GM23248 (cell line): ENCODE measurements at regions of chr2 and their contacts with region 1.

Region 1: GRCh38 chr2:28594289-28595108 is 98.6 kb downstream of the PLB1 start:
- DNase-seq: peak; percentile 84
- H3K4me3 ChIP-seq: no peak overlapping the region
- H3K27ac ChIP-seq: no peak overlapping the region
- H3K4me1 ChIP-seq: 0 out of 2 replicates have a peak, but pooled peaks cover 8% of the 10 kb centered on the region
- H3K27me3 ChIP-seq: no peaks in the 10 kb centered on the region

Region 2: DNA sequence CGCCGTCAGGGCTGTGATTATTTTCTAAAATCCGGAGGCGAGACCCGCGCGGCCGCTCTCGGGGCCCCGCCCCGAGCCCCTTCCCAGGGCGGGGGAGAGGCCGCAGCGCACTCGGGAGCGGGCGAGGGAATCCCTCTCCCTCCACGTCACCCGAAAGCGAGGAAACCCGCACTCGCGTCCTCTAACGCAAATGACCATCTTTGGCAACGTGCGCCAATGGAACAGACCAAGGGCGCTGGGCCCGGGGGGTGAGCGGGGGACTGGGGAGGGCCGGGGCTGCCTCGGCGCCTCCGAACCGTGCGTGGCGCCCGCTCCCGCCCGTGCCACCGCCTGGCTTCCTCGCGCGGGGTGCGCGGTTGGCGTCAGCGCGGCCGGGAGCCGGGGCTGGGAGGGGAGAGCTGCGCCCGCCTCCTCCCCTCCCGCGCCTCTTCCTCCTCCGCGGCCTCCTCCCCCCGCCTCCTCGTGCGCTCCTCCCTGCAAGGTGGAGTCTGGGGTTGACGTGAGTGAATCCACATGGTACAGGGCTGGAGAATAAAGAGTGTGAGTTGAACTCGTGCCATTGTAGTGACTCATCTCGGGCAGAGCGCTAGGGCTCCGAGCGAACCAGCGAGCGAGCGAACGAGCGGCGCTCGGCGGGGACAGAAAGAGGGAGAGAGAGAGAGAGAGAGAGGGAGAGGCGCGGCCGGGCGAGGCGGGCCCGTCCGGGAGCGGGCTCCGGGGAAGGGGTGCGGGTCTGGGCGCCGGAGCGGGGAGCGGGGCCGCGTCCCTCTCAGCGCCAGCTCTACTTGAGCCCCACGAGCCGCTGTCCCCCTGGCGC is 202.0 kb before region 1 on chr2 and contains the start of gene FOSL2:
- in situ Hi-C with region 1: no loop called
- DNase-seq: peak; percentile 99
- H3K4me3 ChIP-seq: peak within 1 kb of the TSS; percentile 95
- H3K27ac ChIP-seq: peak within 1 kb of the TSS; percentile 98
- H3K4me1 ChIP-seq: peaks cover 21% of the 10 kb centered on the region
- H3K27me3 ChIP-seq: no peaks in the 10 kb centered on the region
- total RNA-seq, gene FOSL2: 78.0 and 83.5 TPM in 2 replicates

Region 3: DNA sequence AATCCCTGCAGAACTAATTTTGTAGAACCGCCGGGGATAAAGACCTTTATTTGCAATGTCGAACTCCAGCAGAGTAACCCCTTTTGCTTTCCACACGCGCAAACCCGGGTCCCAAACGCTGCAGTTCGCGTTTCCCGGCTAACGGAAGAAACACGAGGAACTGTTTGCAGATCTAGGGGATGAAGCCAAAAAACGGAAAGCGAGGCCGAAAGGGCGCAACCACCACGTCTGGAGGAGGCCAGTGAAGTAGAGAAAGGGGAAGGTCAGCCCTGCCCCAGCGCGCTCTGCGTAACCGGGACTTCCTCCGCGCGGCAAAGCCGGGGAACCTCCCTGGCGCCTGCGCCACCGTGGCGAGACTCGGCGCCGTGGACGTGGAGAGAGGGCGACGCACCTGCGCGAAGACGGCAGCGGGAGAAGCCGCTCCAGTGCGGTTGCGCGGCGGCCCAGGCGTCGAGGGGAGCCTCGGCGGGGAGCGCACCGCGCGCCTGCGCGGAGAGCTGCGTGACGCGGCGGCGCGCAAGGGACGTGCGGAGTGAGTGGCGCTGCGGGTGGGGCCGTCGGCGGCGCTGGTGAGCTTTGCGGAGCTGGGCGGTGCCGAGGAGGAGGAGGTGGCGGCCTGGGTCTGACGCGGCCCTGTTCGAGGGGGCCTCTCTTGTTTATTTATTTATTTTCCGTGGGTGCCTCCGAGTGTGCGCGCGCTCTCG is 156.9 kb after region 1 on chr2 and contains the start of gene PPP1CB:
- in situ Hi-C with region 1: loop called (anchors 10 kb)
- DNase-seq: peak; percentile 99
- H3K4me3 ChIP-seq: peak within 1 kb of the TSS; percentile 88
- H3K27ac ChIP-seq: peak within 1 kb of the TSS; percentile 93
- H3K4me1 ChIP-seq: peaks cover 31% of the 10 kb centered on the region
- H3K27me3 ChIP-seq: no peaks in the 10 kb centered on the region
- total RNA-seq, gene PPP1CB: 119 and 127 TPM in 2 replicates

Region 4: GRCh38 chr2:29561181-29561580 is 966.7 kb after region 1 on chr2:
- in situ Hi-C with region 1: no loop called
- DNase-seq: no peak
- H3K4me3 ChIP-seq: no peak overlapping the region
- H3K27ac ChIP-seq: no peak overlapping the region
- H3K4me1 ChIP-seq: no peaks in the 10 kb centered on the region
- H3K27me3 ChIP-seq: peaks cover 6% of the 10 kb centered on the region